Mammary epithelial cell (primary cell): ENCODE measurements at regions of chr1 and their contacts with region 1.

Region 1: DNA sequence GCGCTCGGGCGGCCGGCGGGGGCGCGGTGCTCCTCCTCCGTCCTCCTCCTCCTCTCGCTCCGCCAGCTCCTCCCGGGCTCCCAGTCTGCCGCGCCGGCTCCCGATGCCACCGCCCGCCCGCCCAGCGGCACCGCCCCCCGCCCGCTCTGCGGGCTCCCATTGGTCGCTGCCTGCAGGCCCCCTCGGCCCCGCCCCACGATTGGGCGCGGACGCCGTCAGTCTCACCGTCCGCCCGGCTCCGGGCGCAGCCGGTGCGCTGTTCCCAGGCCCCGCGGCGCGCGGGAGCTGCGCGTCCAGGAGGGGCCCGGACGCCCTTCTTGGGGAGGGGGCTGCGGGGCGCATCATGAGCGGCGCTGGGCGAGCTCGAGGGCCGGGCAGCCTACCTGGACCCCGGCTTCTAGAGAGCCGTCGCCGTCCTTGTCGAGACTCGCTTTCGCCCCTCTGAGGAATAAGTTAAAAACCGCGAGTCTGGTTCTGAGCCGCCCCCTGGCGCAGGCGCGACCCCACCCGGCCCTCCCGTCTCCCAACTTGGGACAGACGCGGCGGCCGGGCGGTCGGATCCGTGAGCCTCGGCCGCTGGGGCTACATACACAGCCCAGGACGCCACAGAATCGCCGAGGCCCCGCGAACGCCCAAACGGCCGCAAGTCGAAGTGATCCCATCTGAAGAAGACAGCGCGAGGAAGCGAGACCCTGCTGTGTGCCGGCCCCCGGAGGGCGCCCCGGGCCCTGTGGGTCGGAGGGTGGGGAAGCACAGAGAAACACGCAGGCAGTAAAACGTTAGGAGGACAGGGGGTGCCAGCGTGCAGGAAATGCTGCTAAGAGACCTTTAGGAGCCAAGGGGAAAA is at the start of gene SIPA1L2:
- DNase-seq: peak; percentile 88
- H3K4me3 ChIP-seq: peak within 1 kb of the TSS; percentile 64 to 83 (median 77)
- H3K27ac ChIP-seq: no peak within 1 kb of the TSS
- H3K4me1 ChIP-seq: peaks cover 16% of the 10 kb centered on the region
- H3K27me3 ChIP-seq: no peaks in the 10 kb centered on the region
- CTCF ChIP-seq: peak; percentile 37 to 74
- total RNA-seq, gene SIPA1L2: 3.8 to 19.8 TPM

Region 2: GRCh38 chr1:231724876-231725724 is 905.2 kb before region 1 on chr1:
- CTCF ChIA-PET with region 1: no interaction called
- dilution Hi-C with region 1: no loop called
- in situ Hi-C with region 1: no loop called
- intact Hi-C with region 1: loop called (anchors 1 kb)
- DNase-seq: peak; percentile 28
- H3K4me3 ChIP-seq: no peak overlapping the region
- H3K27ac ChIP-seq: no peak overlapping the region
- H3K4me1 ChIP-seq: no peaks in the 10 kb centered on the region
- H3K27me3 ChIP-seq: peaks cover 2% of the 10 kb centered on the region
- CTCF ChIP-seq: peak; percentile 37 to 50

Region 3: GRCh38 chr1:231866392-231867331 is 763.6 kb before region 1 on chr1:
- CTCF ChIA-PET with region 1: interaction called, 7 read pairs
- dilution Hi-C with region 1: no loop called
- in situ Hi-C with region 1: loop called (anchors 5 to 10 kb)
- intact Hi-C with region 1: loop called (anchors 1 kb)
- DNase-seq: peak; percentile 17
- H3K4me3 ChIP-seq: no peak overlapping the region
- H3K27ac ChIP-seq: no peak overlapping the region
- H3K4me1 ChIP-seq: no peaks in the 10 kb centered on the region
- H3K27me3 ChIP-seq: no peaks in the 10 kb centered on the region
- CTCF ChIP-seq: peak; percentile 73 to 82

Region 4: DNA sequence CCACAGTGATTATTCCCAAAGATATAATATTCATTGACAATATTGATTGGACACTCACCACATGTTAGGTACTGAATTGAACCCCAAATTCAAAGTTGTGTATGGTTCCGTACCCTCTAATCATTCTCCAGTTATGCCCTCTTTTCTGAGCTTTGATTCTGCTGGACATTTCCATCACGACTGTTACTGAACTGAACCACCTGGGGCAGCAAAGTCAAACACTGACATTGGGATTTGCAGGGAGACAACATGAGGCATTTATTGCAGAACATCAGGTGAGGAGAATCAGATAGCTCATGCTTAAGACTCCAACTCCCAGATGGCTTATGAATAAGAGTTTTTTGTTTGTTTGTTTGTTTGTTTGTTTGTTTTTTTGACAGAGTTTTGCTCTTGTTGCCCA is 582.8 kb before region 1 on chr1:
- CTCF ChIA-PET with region 1: no interaction called
- dilution Hi-C with region 1: no loop called
- in situ Hi-C with region 1: no loop called
- intact Hi-C with region 1: loop called (anchors 5 kb)
- DNase-seq: no peak
- H3K4me3 ChIP-seq: no peak overlapping the region
- H3K27ac ChIP-seq: no peak overlapping the region
- H3K4me1 ChIP-seq: peaks cover 12% of the 10 kb centered on the region
- H3K27me3 ChIP-seq: no peaks in the 10 kb centered on the region
- CTCF ChIP-seq: peak; percentile 19 to 37

Region 5: GRCh38 chr1:232422901-232423300 is 207.4 kb before region 1 on chr1:
- CTCF ChIA-PET with region 1: interaction called, 5 read pairs
- dilution Hi-C with region 1: no loop called
- in situ Hi-C with region 1: no loop called
- intact Hi-C with region 1: loop called (anchors 5 kb)
- DNase-seq: peak; percentile 43
- H3K4me3 ChIP-seq: no peak overlapping the region
- H3K27ac ChIP-seq: no peak overlapping the region
- H3K4me1 ChIP-seq: peaks cover 10% of the 10 kb centered on the region
- H3K27me3 ChIP-seq: no peaks in the 10 kb centered on the region
- CTCF ChIP-seq: no peak

Region 6: DNA sequence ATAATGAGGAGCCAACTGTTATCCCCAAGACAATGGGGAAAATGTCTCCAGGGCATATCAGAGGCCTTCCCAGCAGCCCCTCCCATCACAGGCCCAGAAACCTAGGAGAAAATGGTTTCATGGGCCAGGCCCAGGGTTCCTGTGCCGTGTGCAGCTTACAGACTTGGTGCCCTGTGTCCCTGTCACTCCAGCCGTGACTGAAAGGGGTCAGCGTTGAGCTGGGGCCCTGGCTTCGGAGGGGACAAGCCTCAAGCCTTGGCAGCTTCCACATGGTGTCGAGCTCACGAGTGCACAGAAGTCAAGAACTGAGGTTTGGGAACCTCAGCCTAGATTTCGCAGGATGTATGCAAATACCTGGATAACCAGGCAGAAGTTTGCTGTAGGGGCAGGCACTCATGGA is 18.4 kb before region 1 on chr1:
- CTCF ChIA-PET with region 1: no interaction called
- dilution Hi-C with region 1: no loop called
- in situ Hi-C with region 1: no loop called
- intact Hi-C with region 1: no loop called
- DNase-seq: no peak
- H3K4me3 ChIP-seq: no peak overlapping the region
- H3K27ac ChIP-seq: no peak overlapping the region
- H3K4me1 ChIP-seq: peaks cover 15% of the 10 kb centered on the region
- H3K27me3 ChIP-seq: no peaks in the 10 kb centered on the region
- CTCF ChIP-seq: no peak

Region 7: DNA sequence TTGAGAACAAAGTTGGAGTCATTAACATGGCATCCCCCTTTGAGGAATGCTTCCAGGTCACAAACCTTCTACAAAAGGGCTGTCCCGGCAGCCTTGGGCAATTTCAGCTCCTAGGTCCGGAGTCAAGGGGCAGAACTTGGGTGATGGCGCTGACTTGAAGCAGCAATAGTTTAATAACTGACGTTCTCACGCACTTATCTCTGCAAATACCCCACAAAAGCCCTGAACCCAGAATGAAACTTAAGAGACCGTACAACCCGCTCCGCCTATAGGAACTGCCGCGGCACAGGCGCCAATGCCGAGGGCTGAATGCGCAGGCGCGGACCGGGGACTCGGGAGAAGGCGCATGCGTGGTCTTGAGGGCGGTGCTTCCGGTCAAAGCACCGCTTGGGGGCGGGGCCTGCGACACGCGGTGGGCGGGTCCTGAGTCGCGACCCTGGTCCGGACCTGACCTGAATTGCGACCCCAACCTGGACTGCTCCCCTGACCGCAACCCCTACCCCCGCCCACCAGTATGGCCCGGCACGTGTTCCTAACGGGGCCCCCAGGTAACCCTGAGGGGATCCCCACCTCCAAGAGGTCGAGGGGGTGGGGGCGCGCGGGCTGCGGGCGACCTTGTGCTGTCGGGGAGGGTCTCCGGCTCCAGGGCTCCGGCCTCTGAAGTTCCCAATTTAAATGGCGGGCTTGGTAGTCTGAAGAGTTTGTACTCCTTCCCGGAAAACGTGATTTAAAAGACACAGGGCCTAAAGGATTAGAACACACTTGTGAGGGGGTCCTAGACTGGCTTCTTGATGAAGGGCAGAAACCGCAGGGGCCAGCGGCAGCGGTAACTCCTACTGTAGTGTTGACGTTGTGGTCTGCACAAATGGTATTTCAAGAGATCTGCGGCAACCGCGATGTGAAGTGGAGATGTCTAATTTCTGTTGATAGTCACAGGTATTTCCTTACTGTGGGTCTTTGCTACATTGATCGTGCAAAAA is 320.2 kb after region 1 on chr1 and contains the start of gene NTPCR:
- CTCF ChIA-PET with region 1: interaction called, 10 read pairs
- dilution Hi-C with region 1: no loop called
- in situ Hi-C with region 1: loop called (anchors 5 to 25 kb)
- intact Hi-C with region 1: loop called (anchors 1 kb)
- DNase-seq: peak; percentile 86
- H3K4me3 ChIP-seq: peak within 1 kb of the TSS; percentile 78 to 94 (median 86)
- H3K27ac ChIP-seq: peak within 1 kb of the TSS; percentile 64
- H3K4me1 ChIP-seq: peaks cover 26% of the 10 kb centered on the region
- H3K27me3 ChIP-seq: no peaks in the 10 kb centered on the region
- CTCF ChIP-seq: peak in 1 of 2 donors; percentile 15
- total RNA-seq, gene NTPCR: 15.3 to 47.0 TPM

Region 8: DNA sequence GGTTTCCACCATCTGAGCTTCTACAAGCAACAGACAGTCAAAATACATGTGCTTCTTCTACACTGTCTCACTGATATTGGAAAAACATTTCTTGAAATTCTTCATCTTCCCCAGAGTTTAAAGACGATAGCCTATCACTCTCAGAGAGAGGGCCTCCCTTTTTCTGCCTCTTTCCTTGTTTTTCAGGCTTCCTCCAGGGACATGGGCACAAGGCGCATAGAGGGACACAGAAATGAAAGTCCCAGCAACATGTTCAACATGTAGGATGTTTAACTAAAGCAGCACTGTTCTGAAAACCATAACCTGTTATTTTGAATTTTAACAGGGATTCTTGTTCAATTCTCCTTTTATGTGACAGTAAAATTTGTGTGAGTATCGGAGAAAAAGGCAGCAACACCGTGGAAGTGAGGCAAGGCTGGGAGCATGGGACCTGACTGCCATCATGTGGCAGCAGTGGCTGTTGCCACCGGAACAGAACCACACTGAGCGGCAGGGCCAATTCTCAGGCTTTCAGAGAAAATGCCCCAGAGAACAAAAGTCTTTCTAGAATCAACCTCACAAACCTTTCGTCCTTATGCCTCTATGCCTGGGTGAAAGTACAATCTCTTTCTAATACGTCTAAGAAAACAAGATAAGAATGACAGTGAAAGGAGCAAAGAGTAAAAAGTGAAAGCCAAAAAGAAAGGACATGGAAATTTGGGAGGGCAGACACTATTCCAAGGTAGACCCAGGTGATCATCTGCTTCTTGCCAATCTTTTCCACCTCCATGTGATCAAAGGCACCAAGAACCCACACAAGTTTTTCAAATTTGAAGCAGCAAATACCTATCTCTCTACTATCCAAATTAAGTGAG is 610.8 kb after region 1 on chr1:
- CTCF ChIA-PET with region 1: no interaction called
- dilution Hi-C with region 1: no loop called
- in situ Hi-C with region 1: loop called in 1 of 2 experiments (anchors 10 kb)
- intact Hi-C with region 1: loop called (anchors 1 kb)
- DNase-seq: no peak
- H3K4me3 ChIP-seq: no peak overlapping the region
- H3K27ac ChIP-seq: no peak overlapping the region
- H3K4me1 ChIP-seq: peaks cover 4% of the 10 kb centered on the region
- H3K27me3 ChIP-seq: no peaks in the 10 kb centered on the region
- CTCF ChIP-seq: peak; percentile 34 to 67